Calu3 (cell line): ENCODE measurements at regions of chr2 and their contacts with region 1.

Region 1: GRCh38 chr2:163132850-163133249 is 294.3 kb upstream of the KCNH7 start:
- DNase-seq: no peak
- H3K4me3 Mint-ChIP-seq: no peak overlapping the region
- H3K27ac Mint-ChIP-seq: no peak overlapping the region
- H3K4me1 Mint-ChIP-seq: no peaks in the 10 kb centered on the region
- H3K27me3 Mint-ChIP-seq: no peaks in the 10 kb centered on the region
- CTCF ChIP-seq: peak; percentile 54

Region 2: DNA sequence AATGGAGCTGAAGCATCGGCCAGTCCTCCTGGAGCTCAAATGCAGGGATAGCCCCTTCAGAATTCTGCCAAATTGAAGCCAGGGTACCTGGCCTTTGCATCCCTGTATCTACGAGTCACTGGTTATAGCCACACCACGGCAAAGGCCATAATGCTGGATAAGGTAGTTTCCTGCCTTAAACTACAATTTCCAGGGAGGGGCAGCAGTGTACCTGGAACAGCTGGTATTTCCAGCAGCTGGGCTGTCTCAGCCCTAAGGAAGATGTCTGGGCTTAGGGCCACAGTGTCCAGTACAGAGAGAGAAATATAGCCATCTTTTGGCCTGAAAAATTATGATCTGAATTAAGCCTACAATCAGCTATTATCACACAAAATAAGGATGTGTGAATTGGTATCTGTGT is 608.7 kb before region 1 on chr2:
- CTCF ChIA-PET with region 1: no interaction called
- intact Hi-C with region 1: loop called (anchors 10 kb)
- DNase-seq: peak; percentile 55
- H3K4me3 Mint-ChIP-seq: no peak overlapping the region
- H3K27ac Mint-ChIP-seq: no peak overlapping the region
- H3K4me1 Mint-ChIP-seq: peaks cover 9% of the 10 kb centered on the region
- H3K27me3 Mint-ChIP-seq: no peaks in the 10 kb centered on the region
- CTCF ChIP-seq: no peak

Region 3: GRCh38 chr2:162890690-162891311 is 242.0 kb before region 1 on chr2:
- CTCF ChIA-PET with region 1: no interaction called
- intact Hi-C with region 1: loop called (anchors 1 kb)
- DNase-seq: peak; percentile 61
- H3K4me3 Mint-ChIP-seq: peak overlapping the region; percentile 32
- H3K27ac Mint-ChIP-seq: peak overlapping the region; percentile 39
- H3K4me1 Mint-ChIP-seq: no peaks in the 10 kb centered on the region
- H3K27me3 Mint-ChIP-seq: no peaks in the 10 kb centered on the region
- CTCF ChIP-seq: peak; percentile 52

Region 4: DNA sequence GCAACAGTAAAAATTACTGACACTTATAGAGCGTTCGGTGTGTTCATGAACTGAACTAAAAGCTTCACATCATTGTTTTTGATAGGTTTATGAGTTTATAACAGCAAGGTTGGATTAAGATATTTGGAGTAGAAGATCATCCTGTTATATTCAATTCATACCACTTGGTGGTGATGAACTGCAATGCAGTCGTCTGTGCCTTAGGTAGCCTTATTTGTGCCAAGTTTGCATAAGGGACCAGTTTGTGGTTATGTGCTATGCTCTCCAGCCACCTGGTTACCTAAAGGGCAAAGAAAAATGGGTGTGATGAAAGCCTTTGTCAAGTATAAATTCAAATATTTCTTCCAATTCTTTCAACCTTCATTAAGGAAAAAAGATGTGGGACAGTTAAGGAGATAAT is 143.3 kb before region 1 on chr2:
- CTCF ChIA-PET with region 1: no interaction called
- intact Hi-C with region 1: loop called (anchors 1 kb)
- DNase-seq: peak; percentile 27
- H3K4me3 Mint-ChIP-seq: no peak overlapping the region
- H3K27ac Mint-ChIP-seq: no peak overlapping the region
- H3K4me1 Mint-ChIP-seq: peaks cover 19% of the 10 kb centered on the region
- H3K27me3 Mint-ChIP-seq: no peaks in the 10 kb centered on the region
- CTCF ChIP-seq: no peak

Region 5: GRCh38 chr2:163028807-163029206 is 104.0 kb before region 1 on chr2:
- CTCF ChIA-PET with region 1: no interaction called
- intact Hi-C with region 1: no loop called
- DNase-seq: no peak
- H3K4me3 Mint-ChIP-seq: no peak overlapping the region
- H3K27ac Mint-ChIP-seq: no peak overlapping the region
- H3K4me1 Mint-ChIP-seq: peaks cover 8% of the 10 kb centered on the region
- H3K27me3 Mint-ChIP-seq: no peaks in the 10 kb centered on the region
- CTCF ChIP-seq: no peak

Region 6: GRCh38 chr2:163231666-163232065 is 98.8 kb after region 1 on chr2:
- CTCF ChIA-PET with region 1: no interaction called
- intact Hi-C with region 1: no loop called
- DNase-seq: no peak
- H3K4me3 Mint-ChIP-seq: no peak overlapping the region
- H3K27ac Mint-ChIP-seq: no peak overlapping the region
- H3K4me1 Mint-ChIP-seq: no peaks in the 10 kb centered on the region
- H3K27me3 Mint-ChIP-seq: no peaks in the 10 kb centered on the region
- CTCF ChIP-seq: no peak

Region 7: DNA sequence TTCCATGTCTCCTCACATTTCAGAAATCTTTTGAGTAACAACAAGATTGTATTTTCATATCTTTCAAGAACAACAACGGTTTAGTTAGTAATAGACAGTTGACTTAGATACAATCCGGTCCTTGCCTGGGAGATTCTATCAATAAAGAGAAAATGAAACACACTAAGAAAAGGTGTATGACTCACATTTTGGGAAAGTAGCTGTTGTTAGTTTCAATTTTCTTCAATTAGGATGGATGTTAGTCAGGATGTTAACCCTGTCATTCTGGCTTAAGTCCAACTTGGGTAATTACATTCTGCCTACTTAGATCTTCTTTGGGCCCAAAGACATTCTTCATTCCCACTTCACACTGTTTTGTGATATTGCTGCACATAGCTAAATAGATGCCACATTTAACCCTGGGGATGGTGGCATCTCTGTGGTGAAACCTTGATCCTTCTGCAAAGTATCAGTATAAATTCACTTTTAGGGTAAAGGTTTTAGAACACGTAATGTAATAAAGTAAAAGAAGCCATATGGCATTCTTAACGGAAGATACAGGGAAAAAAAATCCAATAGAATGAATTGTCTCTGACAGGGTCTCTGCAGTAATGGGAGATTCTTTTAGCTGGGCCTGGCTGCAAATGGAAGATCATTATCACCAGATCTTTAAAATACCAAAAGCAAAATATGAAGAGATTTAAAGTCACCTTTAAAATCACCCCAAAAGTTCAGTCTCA is 237.5 kb after region 1 on chr2:
- CTCF ChIA-PET with region 1: no interaction called
- intact Hi-C with region 1: no loop called
- DNase-seq: no peak
- H3K4me3 Mint-ChIP-seq: no peak overlapping the region
- H3K27ac Mint-ChIP-seq: no peak overlapping the region
- H3K4me1 Mint-ChIP-seq: no peaks in the 10 kb centered on the region
- H3K27me3 Mint-ChIP-seq: no peaks in the 10 kb centered on the region
- CTCF ChIP-seq: no peak